GM10248 (cell line): ENCODE measurements at regions of chr5 and their contacts with region 1.

Region 1: GRCh38 chr5:5063533-5063953 is 76.6 kb upstream of the ADAMTS16 start:
- DNase-seq: no peak
- CTCF ChIP-seq: peak; percentile 43

Region 2: DNA sequence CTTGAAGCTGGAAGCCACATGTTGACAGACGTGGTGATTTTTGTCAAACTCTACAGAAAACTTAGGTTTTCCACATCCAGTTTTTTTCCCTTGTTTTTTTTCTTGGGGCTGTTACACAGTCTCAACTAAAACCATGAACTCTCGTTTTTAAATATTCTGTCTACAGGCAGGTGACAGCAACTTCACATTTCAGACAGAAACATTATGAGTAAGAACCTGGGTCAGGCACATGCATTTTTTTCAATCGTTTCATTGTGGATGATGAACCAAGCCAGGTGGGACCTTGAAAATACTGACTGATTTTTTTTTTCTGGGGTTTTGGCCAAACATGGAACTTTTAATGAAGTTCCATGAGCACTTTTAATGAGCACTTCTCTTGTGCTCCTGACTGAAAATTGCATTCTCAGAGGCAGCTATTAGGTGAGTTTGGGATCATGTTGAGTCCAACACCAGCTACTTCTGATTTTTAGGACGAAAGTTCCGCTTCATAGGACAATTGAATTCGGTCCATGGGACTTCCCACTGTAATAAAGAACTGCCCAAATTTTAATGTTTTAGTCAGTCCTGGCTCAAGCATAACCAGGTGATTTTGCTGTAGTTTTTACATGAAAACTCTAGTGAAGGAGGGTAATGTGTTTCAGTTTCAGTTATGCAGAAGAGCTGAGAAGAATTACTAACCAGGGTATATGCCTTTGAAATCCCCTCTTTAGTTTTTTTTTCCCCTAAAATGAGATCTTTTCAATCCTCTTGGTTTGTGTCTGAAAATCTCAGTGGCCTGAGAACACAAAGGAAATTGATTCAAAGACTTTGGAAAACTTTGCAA is 16.7 kb before region 1 on chr5:
- CTCF ChIA-PET with region 1: interaction called, 18 read pairs
- POLR2A ChIA-PET with region 1: no interaction called
- DNase-seq: peak; percentile 23
- CTCF ChIP-seq: no peak

Region 3: GRCh38 chr5:5116956-5117355 is 53.4 kb after region 1 on chr5:
- CTCF ChIA-PET with region 1: no interaction called
- POLR2A ChIA-PET with region 1: no interaction called
- DNase-seq: no peak
- CTCF ChIP-seq: no peak